GM12878 (cell line): ENCODE measurements at regions of chr2 and their contacts with region 1.

Region 1: DNA sequence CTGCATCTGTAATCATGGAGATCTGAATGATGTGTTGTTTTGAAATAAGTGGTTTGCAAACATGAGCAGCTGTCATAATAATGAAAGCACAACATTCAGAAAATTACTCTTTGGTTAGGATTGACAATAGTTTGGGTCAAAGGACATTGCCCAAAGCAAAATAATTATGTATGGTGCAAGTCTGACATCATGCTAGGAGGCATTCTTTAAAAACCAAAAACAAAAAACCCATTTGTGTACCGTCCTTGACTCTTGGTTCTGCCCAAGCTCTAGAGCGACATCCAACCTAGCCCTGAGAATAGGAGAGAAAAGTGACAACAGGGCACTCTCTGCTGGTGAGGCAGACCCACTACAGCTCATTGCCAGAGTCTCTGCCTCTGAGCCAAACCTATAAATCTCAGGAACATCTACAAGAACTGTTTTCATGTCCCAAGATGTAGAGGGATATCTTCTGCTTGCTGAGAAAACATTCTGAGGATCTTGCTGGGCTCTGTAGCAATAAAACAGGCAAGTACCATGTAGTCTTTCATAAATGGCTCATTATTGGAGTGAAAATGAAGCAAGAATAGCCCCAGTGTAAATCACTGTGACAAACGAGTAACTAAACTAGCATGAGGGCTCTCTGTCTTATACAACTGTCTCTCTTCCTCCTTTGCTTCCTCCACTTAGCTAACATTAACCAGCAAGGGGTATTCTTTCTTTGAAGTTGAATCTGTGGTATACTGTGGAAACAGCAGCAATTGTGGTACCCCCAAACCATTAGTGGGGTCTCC is 266.8 kb upstream of the CXCR4 start:
- DNase-seq: no peak
- ATAC-seq: peak; percentile 68
- H3K4me3 ChIP-seq: no peak overlapping the region
- H3K27ac ChIP-seq: no peak overlapping the region
- H3K4me1 ChIP-seq: peaks cover 21% of the 10 kb centered on the region
- H3K27me3 ChIP-seq: no peaks in the 10 kb centered on the region
- CTCF ChIP-seq: peak; percentile 83 to 92 (median 87)
- EP300 ChIP-seq: peak; percentile 28 to 37; a peak in 1 of 4 replicates
- POLR2A ChIP-seq: no peak
- RAD21 ChIP-seq: peak; percentile 91

Region 2: GRCh38 chr2:135797497-135798274 is 587.0 kb before region 1 on chr2:
- CTCF ChIA-PET with region 1: interaction called, 38 read pairs
- POLR2A ChIA-PET with region 1: no interaction called
- RAD21 ChIA-PET with region 1: interaction called, 9 read pairs
- SMC1A ChIA-PET with region 1: interaction called, 10 read pairs
- in situ Hi-C with region 1: no loop called
- intact Hi-C with region 1: loop called (anchors 2 kb)
- DNase-seq: peak; percentile 36
- ATAC-seq: peak; percentile 89
- H3K4me3 ChIP-seq: no peak overlapping the region
- H3K27ac ChIP-seq: no peak overlapping the region
- H3K4me1 ChIP-seq: peaks cover 11% of the 10 kb centered on the region
- H3K27me3 ChIP-seq: no peaks in the 10 kb centered on the region
- CTCF ChIP-seq: peak; percentile 94 to 95 (median 94)
- EP300 ChIP-seq: no peak
- POLR2A ChIP-seq: no peak
- RAD21 ChIP-seq: peak; percentile 52

Region 3: GRCh38 chr2:135925571-135925970 is 459.1 kb before region 1 on chr2:
- CTCF ChIA-PET with region 1: interaction called, 14 read pairs
- POLR2A ChIA-PET with region 1: interaction called, 3 read pairs
- RAD21 ChIA-PET with region 1: interaction called, 6 read pairs
- SMC1A ChIA-PET with region 1: interaction called, 10 read pairs
- in situ Hi-C with region 1: no loop called
- intact Hi-C with region 1: no loop called
- DNase-seq: no peak
- ATAC-seq: no peak
- H3K4me3 ChIP-seq: no peak overlapping the region
- H3K27ac ChIP-seq: no peak overlapping the region
- H3K4me1 ChIP-seq: no peaks in the 10 kb centered on the region
- H3K27me3 ChIP-seq: no peaks in the 10 kb centered on the region
- CTCF ChIP-seq: no peak
- EP300 ChIP-seq: no peak
- POLR2A ChIP-seq: no peak
- RAD21 ChIP-seq: no peak

Region 4: GRCh38 chr2:136013955-136014354 is 370.8 kb before region 1 on chr2:
- CTCF ChIA-PET with region 1: interaction called, 12 read pairs
- POLR2A ChIA-PET with region 1: no interaction called
- RAD21 ChIA-PET with region 1: interaction called, 5 read pairs
- SMC1A ChIA-PET with region 1: interaction called, 4 read pairs
- in situ Hi-C with region 1: no loop called
- intact Hi-C with region 1: no loop called
- DNase-seq: no peak
- ATAC-seq: no peak
- H3K4me3 ChIP-seq: no peak overlapping the region
- H3K27ac ChIP-seq: no peak overlapping the region
- H3K4me1 ChIP-seq: peaks cover 3% of the 10 kb centered on the region; the same call in 1 of the 2 replicates
- H3K27me3 ChIP-seq: no peaks in the 10 kb centered on the region
- CTCF ChIP-seq: no peak
- EP300 ChIP-seq: no peak
- POLR2A ChIP-seq: no peak
- RAD21 ChIP-seq: no peak

Region 5: GRCh38 chr2:136207030-136207623 is 177.6 kb before region 1 on chr2:
- CTCF ChIA-PET with region 1: interaction called, 8 read pairs
- POLR2A ChIA-PET with region 1: interaction called, 4 read pairs
- RAD21 ChIA-PET with region 1: interaction called, 17 read pairs
- SMC1A ChIA-PET with region 1: interaction called, 32 read pairs
- in situ Hi-C with region 1: no loop called
- intact Hi-C with region 1: loop called (anchors 2 kb)
- DNase-seq: peak; percentile 68
- ATAC-seq: peak; percentile 79
- H3K4me3 ChIP-seq: no peak overlapping the region
- H3K27ac ChIP-seq: no peak overlapping the region
- H3K4me1 ChIP-seq: peaks cover 21% of the 10 kb centered on the region
- H3K27me3 ChIP-seq: no peaks in the 10 kb centered on the region; a peak in 1 of 4 replicates
- CTCF ChIP-seq: no peak
- EP300 ChIP-seq: peak; percentile 26 to 55; a peak in 2 of 4 replicates
- POLR2A ChIP-seq: no peak
- RAD21 ChIP-seq: 0 out of 2 replicates have a peak, but pooled peaks have one; percentile 0

Region 6: GRCh38 chr2:136305517-136306192 is 79.1 kb before region 1 on chr2:
- CTCF ChIA-PET with region 1: interaction called, 9 read pairs
- POLR2A ChIA-PET with region 1: no interaction called
- RAD21 ChIA-PET with region 1: interaction called, 20 read pairs
- SMC1A ChIA-PET with region 1: interaction called, 9 read pairs
- in situ Hi-C with region 1: no loop called
- intact Hi-C with region 1: loop called (anchors 5 kb)
- DNase-seq: no peak
- ATAC-seq: peak; percentile 93
- H3K4me3 ChIP-seq: no peak overlapping the region
- H3K27ac ChIP-seq: no peak overlapping the region
- H3K4me1 ChIP-seq: peaks cover 6% of the 10 kb centered on the region
- H3K27me3 ChIP-seq: peaks cover 0 to 5% of the 10 kb centered on the region in 2 experiments; a peak in 1 of 4 replicates
- CTCF ChIP-seq: no peak
- EP300 ChIP-seq: peak; percentile 62 to 64; a peak in 1 of 4 replicates
- POLR2A ChIP-seq: no peak
- RAD21 ChIP-seq: no peak